ENCODE measurements at regions of chr6 and their contacts with region 1.

Region 1: DNA sequence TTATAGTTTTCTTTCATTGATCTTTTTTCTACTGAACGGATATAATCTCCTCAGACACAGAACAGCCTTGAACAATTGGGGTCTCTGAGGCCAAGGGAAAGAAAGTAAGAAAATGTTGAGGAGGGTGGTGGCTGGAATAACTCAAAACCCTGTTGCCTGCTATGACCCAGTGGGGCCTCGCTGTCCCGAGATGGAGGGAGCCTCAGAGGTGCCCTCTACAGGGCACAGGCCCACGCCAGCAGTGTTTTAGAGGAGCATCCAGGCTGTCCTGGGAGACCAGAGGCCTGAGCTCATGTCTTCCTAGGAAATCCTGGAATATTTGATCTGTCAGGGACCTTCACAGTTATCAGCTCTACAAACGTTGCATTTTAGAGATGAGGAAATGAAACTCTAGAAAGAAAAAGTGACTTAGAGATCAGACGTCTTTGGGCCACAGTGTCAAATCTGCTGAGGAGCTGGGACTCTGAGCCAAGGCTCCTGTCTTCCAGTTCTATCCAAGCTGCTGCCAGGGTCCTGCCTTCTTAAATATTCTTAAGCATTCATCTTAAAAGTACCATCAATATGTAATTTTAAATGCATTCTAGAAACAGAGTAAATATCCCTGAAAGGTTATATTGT is 26.3 kb downstream of the ALDH5A1 start:
- DNase-seq: peak in 3 of 4 experiments; percentile 30 to 71 (median 69)
- ATAC-seq: peak; percentile 97
- H3K4me3 ChIP-seq: no peak overlapping the region
- H3K27ac ChIP-seq: no peak overlapping the region
- H3K4me1 ChIP-seq: peaks cover 4 to 8% of the 10 kb centered on the region in 2 experiments; a peak in 4 of 5 replicates
- H3K27me3 ChIP-seq: no peaks in the 10 kb centered on the region
- CTCF ChIP-seq: peak; percentile 80 to 90 (median 81)
- EP300 ChIP-seq: no peak
- POLR2A ChIP-seq: no peak
- RAD21 ChIP-seq: peak; percentile 23 to 65; a peak in 3 of 4 replicates

Region 2: DNA sequence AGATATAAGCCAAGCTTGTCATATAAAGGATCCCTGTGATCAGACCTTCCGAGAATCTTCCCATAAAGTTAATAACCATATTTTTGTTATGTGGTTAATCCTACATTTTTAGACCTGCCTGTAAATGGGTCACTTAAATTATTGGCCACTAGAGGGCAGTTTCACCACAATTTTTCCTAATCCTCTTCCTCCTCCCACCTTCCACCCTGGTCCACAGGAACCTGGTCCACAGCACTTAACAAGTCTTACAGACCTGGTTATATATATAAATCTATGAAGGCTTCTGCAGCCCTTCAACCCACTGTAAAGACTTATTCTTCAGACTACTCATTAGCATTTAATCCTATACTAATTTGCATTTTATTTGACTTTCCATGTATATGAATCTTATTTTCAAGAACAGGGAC is 90.0 kb before region 1 on chr6:
- CTCF ChIA-PET with region 1: interaction called, 4 read pairs
- POLR2A ChIA-PET with region 1: no interaction called
- in situ Hi-C with region 1: no loop called
- intact Hi-C with region 1: loop called (anchors 1 kb)
- DNase-seq: peak; percentile 67 to 71 (median 68)
- ATAC-seq: peak; percentile 90
- H3K4me3 ChIP-seq: no peak overlapping the region
- H3K27ac ChIP-seq: no peak overlapping the region
- H3K4me1 ChIP-seq: peaks cover 0 to 8% of the 10 kb centered on the region in 2 experiments; a peak in 3 of 5 replicates
- H3K27me3 ChIP-seq: no peaks in the 10 kb centered on the region
- CTCF ChIP-seq: peak; percentile 65 to 84 (median 77)
- EP300 ChIP-seq: no peak
- POLR2A ChIP-seq: no peak
- RAD21 ChIP-seq: peak; percentile 36 to 74; a peak in 3 of 4 replicates

Region 3: DNA sequence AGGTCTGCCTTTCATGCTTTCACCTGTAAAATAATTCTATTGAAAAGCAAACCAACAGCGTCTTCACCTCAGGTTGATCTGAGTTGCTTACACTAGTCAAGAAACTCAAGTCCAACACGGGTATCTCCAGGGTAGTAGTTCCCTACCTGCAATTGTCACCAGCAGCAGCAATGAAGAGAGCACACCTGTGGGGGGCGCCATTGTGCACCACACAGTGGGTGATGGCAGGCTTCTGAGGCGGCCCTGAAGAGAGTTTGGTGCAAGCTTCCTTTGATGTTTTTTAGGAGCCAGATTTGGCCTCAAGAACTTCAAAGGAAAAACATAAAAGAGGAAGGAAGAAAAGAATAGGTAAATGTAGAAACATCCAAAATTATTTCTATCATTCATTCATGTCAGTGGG is 79.9 kb after region 1 on chr6:
- CTCF ChIA-PET with region 1: no interaction called
- POLR2A ChIA-PET with region 1: no interaction called
- in situ Hi-C with region 1: no loop called
- intact Hi-C with region 1: no loop called
- DNase-seq: peak in 3 of 4 experiments; percentile 22 to 36 (median 28)
- ATAC-seq: peak; percentile 49; the same call in 2 of the 3 replicates
- H3K4me3 ChIP-seq: no peak overlapping the region
- H3K27ac ChIP-seq: no peak overlapping the region
- H3K4me1 ChIP-seq: no peaks in the 10 kb centered on the region; a peak in 1 of 5 replicates
- H3K27me3 ChIP-seq: peaks cover 13 to 47% of the 10 kb centered on the region in 2 experiments; a peak in 4 of 5 replicates
- CTCF ChIP-seq: peak in 2 of 3 experiments; percentile 46 to 51; a peak in 4 of 6 replicates
- EP300 ChIP-seq: no peak
- POLR2A ChIP-seq: no peak
- RAD21 ChIP-seq: peak in 1 of 2 experiments; percentile 10; a peak in 1 of 4 replicates

Region 4: DNA sequence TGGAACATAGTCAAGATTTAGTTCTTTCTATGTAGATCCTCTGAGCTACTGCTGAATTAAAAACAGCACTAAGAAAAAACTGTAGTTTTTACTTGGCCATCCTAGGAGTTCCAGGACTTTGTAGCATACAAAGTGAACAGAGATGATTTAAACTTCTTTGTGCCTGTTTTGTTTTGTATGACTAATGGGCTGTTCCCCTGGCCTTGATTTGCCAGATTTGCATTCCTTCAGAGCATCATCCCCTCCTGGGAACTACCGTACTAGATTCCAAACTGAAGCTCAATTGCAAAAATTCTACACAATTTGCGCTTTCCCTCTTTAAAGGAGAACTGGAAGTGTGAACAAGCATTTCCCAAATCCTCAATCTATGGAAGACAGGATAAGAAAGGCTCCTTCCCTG is 168.9 kb after region 1 on chr6:
- CTCF ChIA-PET with region 1: interaction called, 15 read pairs
- POLR2A ChIA-PET with region 1: no interaction called
- in situ Hi-C with region 1: no loop called
- intact Hi-C with region 1: loop called (anchors 2 kb)
- DNase-seq: no peak
- ATAC-seq: no peak
- H3K4me3 ChIP-seq: no peak overlapping the region
- H3K27ac ChIP-seq: no peak overlapping the region
- H3K4me1 ChIP-seq: no peaks in the 10 kb centered on the region
- H3K27me3 ChIP-seq: no peaks in the 10 kb centered on the region
- CTCF ChIP-seq: no peak
- EP300 ChIP-seq: no peak
- POLR2A ChIP-seq: no peak
- RAD21 ChIP-seq: no peak

Region 5: GRCh38 chr6:24766680-24767462 is 245.8 kb after region 1 on chr6:
- CTCF ChIA-PET with region 1: interaction called, 3 read pairs
- POLR2A ChIA-PET with region 1: no interaction called
- in situ Hi-C with region 1: no loop called
- intact Hi-C with region 1: loop called (anchors 5 kb)
- DNase-seq: no peak
- ATAC-seq: peak; percentile 59
- H3K4me3 ChIP-seq: no peak overlapping the region
- H3K27ac ChIP-seq: no peak overlapping the region
- H3K4me1 ChIP-seq: no peaks in the 10 kb centered on the region; a peak in 1 of 5 replicates
- H3K27me3 ChIP-seq: no peaks in the 10 kb centered on the region
- CTCF ChIP-seq: peak in 2 of 3 experiments; percentile 11 to 76; a peak in 2 of 6 replicates
- EP300 ChIP-seq: no peak
- POLR2A ChIP-seq: no peak
- RAD21 ChIP-seq: peak; percentile 77 to 78

Region 6: GRCh38 chr6:24991810-24992467 is 470.9 kb after region 1 on chr6:
- CTCF ChIA-PET with region 1: interaction called, 3 read pairs
- POLR2A ChIA-PET with region 1: no interaction called
- in situ Hi-C with region 1: no loop called
- intact Hi-C with region 1: loop called (anchors 5 kb)
- DNase-seq: peak; percentile 58 to 67 (median 62)
- ATAC-seq: peak; percentile 95
- H3K4me3 ChIP-seq: no peak overlapping the region
- H3K27ac ChIP-seq: no peak overlapping the region
- H3K4me1 ChIP-seq: no peaks in the 10 kb centered on the region
- H3K27me3 ChIP-seq: no peaks in the 10 kb centered on the region
- CTCF ChIP-seq: peak; percentile 77 to 83 (median 78)
- EP300 ChIP-seq: no peak
- POLR2A ChIP-seq: no peak
- RAD21 ChIP-seq: peak; percentile 57 to 75

Region 7: DNA sequence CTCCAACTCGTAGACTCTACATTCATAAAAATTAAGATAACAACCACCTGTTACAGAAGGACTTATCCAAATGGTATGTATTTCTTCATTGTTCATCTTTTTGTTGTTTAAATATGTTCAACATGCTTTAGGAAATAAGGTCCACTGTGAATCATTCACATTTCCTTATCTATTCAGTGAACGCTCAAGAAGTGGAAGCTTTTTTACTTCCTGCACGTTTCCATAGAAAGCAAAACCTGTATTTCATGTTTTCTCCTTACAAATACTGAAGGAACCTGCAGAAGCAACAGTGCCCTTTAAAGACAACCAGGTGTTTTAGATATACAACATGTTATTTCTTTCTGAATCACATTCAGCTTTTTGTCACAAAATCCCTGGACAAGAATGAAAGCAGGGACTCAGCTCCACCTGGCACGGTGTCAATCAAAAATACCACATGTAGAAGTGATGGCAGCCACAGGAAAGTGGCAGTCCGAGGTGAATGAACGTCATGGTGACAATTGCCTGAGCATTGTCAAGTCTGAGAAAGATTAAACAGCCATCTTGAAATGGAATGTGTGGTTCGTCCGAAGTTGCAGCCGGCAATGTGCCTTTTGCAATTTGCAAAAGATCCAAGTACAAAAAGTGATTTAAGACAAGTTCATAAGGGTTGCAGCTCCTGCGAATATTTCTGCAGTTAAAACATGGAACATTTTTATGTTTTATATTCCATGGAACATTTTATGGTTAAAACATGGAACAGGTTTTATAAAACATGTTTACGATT is 481.5 kb after region 1 on chr6:
- CTCF ChIA-PET with region 1: no interaction called
- POLR2A ChIA-PET with region 1: no interaction called
- in situ Hi-C with region 1: no loop called
- intact Hi-C with region 1: no loop called
- DNase-seq: no peak
- ATAC-seq: no peak
- H3K4me3 ChIP-seq: no peak overlapping the region
- H3K27ac ChIP-seq: no peak overlapping the region
- H3K4me1 ChIP-seq: no peaks in the 10 kb centered on the region; a peak in 1 of 5 replicates
- H3K27me3 ChIP-seq: peaks cover 2 to 12% of the 10 kb centered on the region in 2 experiments
- CTCF ChIP-seq: no peak
- EP300 ChIP-seq: no peak
- POLR2A ChIP-seq: no peak
- RAD21 ChIP-seq: no peak